ENCODE measurements at regions of chr19 and their contacts with region 1.

Region 1: GRCh38 chr19:14889994-14890642 is 4.2 kb upstream of the OR7A17 start:
- DNase-seq: no peak
- ATAC-seq: no peak

Region 2: GRCh38 chr19:14786421-14786851 is 103.7 kb before region 1 on chr19:
- intact Hi-C with region 1: loop called (anchors 2 kb)
- DNase-seq: peak; percentile 81
- ATAC-seq: no peak

Region 3: GRCh38 chr19:14943601-14944000 is 53.5 kb after region 1 on chr19:
- intact Hi-C with region 1: no loop called
- DNase-seq: no peak
- ATAC-seq: no peak

Region 4: GRCh38 chr19:14954071-14954659 is 64.0 kb after region 1 on chr19:
- intact Hi-C with region 1: no loop called
- DNase-seq: no peak
- ATAC-seq: no peak

Measured in Right ventricle myocardium inferior (tissue), 1 donor.